Common myeloid progenitor, CD34-positive (primary cell): ENCODE measurements at regions of chr6 and their contacts with region 1.

Region 1: GRCh38 chr6:152863618-152864326 is 113.2 kb downstream of the VIP start:
- DNase-seq: peak; percentile 64 to 86 (median 77)
- H3K4me3 ChIP-seq: no peak overlapping the region
- H3K27ac ChIP-seq: no peak overlapping the region
- H3K4me1 ChIP-seq: no peaks in the 10 kb centered on the region
- H3K27me3 ChIP-seq: peaks cover 0 to 4% (median 0%) of the 10 kb centered on the region in 5 experiments

Region 2: DNA sequence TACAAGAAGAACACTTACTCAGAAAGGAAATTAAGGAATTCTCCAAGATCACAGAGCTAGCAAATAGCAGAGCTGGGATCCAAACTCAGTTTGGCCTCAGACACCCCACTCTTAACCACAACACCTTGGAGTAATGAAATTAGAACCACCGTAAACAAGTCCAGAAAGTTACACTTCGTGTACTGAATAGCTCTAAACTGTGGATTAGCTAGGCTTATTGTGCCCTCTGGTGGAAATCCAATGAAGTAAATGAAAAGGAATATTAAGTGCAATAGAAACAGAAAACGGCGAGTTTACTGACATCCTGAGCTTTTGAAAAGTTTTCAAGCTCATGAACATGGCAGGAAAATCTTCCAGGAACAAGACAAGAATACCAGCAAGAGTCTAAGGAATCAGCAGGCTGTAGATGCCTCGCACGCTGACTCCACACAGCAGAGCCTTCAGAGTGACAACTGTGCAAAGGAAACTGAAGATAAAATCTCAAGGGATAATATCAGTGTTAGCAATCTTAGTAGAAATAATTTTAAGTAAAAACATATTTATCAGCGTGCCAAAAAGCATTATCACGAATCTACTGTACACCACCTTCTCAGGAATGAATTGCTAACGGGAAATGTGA is 84.5 kb after region 1 on chr6:
- CTCF ChIA-PET with region 1: interaction called, 13 read pairs
- POLR2A ChIA-PET with region 1: no interaction called
- DNase-seq: peak; percentile 47 to 70 (median 60)
- H3K4me3 ChIP-seq: peak overlapping the region in 3 of 7 experiments; percentile 16 to 63 (median 16)
- H3K27ac ChIP-seq: no peak overlapping the region
- H3K4me1 ChIP-seq: peaks cover 0 to 6% (median under 1%) of the 10 kb centered on the region in 4 experiments
- H3K27me3 ChIP-seq: peaks cover 0 to 6% (median 0%) of the 10 kb centered on the region in 5 experiments

Region 3: GRCh38 chr6:152954443-152954842 is 90.7 kb after region 1 on chr6:
- CTCF ChIA-PET with region 1: interaction called, 13 read pairs
- POLR2A ChIA-PET with region 1: no interaction called
- DNase-seq: no peak
- H3K4me3 ChIP-seq: no peak overlapping the region
- H3K27ac ChIP-seq: no peak overlapping the region
- H3K4me1 ChIP-seq: no peaks in the 10 kb centered on the region
- H3K27me3 ChIP-seq: peaks cover 0 to 2% (median 0%) of the 10 kb centered on the region in 5 experiments

Region 4: DNA sequence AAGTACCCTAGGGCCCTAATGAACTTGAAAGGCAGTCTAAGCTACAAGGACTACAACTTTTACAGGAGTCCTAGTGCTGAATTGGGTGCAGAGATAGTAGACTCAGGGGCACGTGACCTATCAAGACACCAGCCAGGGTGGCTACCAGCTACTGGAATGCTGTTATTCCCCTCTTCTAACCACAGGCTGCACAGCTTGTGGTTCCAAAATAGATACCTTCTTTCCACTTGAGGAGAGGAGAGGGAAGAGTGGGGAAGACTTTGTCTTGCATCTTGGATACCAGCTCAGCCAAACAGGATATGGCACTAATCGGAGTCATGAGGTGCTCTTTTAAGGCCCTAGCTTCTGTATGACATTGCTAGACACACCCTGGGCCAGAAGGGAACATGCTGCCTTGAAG is 198.7 kb after region 1 on chr6:
- CTCF ChIA-PET with region 1: no interaction called
- POLR2A ChIA-PET with region 1: no interaction called
- DNase-seq: no peak
- H3K4me3 ChIP-seq: no peak overlapping the region
- H3K27ac ChIP-seq: no peak overlapping the region
- H3K4me1 ChIP-seq: no peaks in the 10 kb centered on the region
- H3K27me3 ChIP-seq: peaks cover 0 to 2% (median 0%) of the 10 kb centered on the region in 5 experiments